H1 (cell line): ENCODE measurements at regions of chr7 and their contacts with region 1.

Region 1: DNA sequence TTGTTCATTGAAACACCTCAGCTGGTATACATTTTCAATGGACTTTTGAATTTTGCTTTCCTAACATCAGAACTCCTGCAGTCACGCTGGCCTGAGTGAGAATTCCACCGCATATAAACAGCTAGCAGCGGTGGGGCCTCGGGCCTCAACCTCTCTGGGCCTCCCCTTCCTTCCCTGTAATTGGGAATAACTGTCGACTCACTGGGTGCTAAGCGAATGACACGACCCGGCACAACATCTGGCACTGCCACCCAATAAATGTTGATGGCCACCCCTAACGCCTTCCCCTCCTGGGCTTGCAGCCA is 672 bp downstream of the RCC1L start:
- DNase-seq: no peak
- H3K4me3 ChIP-seq: peak overlapping the region; percentile 85 to 98 (median 92)
- H3K27ac ChIP-seq: peak overlapping the region; percentile 89
- H3K4me1 ChIP-seq: no peaks in the 10 kb centered on the region; a peak in 2 of 7 replicates
- H3K27me3 ChIP-seq: no peaks in the 10 kb centered on the region
- CTCF ChIP-seq: no peak
- EP300 ChIP-seq: no peak
- POLR2A ChIP-seq: no peak
- RAD21 ChIP-seq: no peak

Region 2: GRCh38 chr7:74289018-74289658 is 783.8 kb before region 1 on chr7 and contains the start of gene CLIP2:
- CTCF ChIA-PET with region 1: no interaction called
- POLR2A ChIA-PET with region 1: no interaction called
- DNase-seq: peak in 1 of 2 experiments; percentile 82
- H3K4me3 ChIP-seq: peak within 1 kb of the TSS; percentile 79 to 97 (median 84)
- H3K27ac ChIP-seq: no peak within 1 kb of the TSS
- H3K4me1 ChIP-seq: peaks cover 9 to 44% (median 29%) of the 10 kb centered on the region in 4 experiments
- H3K27me3 ChIP-seq: peaks cover 0 to 4% (median 0%) of the 10 kb centered on the region in 4 experiments; a peak in 3 of 7 replicates
- CTCF ChIP-seq: no peak
- EP300 ChIP-seq: no peak
- POLR2A ChIP-seq: peak in 1 of 2 experiments; percentile 34; a peak in 1 of 3 replicates
- RAD21 ChIP-seq: no peak; a peak in 1 of 4 replicates
- total RNA-seq, gene CLIP2: 39.8 and 41.5 TPM in 2 replicates

Region 3: DNA sequence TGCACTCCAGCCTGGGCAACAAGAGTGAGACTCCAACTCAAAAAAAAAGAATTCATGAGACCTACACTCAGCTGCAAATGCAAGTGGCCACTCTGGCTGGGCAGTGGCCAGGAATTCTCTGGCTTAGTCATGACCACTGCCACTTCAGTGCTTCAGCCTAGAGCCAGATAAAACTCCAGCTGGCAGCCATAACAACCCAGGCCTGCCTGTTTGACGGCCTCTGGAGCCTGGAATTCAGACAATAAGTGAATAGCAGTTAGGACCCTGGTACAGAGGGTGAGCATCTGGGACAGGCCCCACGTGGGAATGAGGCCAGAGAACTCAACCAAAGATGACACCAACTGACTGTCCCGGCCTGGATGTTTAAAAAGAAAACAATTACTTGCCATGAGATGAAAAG is 18.2 kb before region 1 on chr7:
- CTCF ChIA-PET with region 1: no interaction called
- POLR2A ChIA-PET with region 1: interaction called, 21 read pairs
- DNase-seq: no peak
- H3K4me3 ChIP-seq: no peak overlapping the region
- H3K27ac ChIP-seq: no peak overlapping the region
- H3K4me1 ChIP-seq: no peaks in the 10 kb centered on the region
- H3K27me3 ChIP-seq: no peaks in the 10 kb centered on the region
- CTCF ChIP-seq: no peak
- EP300 ChIP-seq: no peak
- POLR2A ChIP-seq: no peak
- RAD21 ChIP-seq: no peak